ENCODE measurements at regions of chrX and their contacts with region 1.

Region 1: DNA sequence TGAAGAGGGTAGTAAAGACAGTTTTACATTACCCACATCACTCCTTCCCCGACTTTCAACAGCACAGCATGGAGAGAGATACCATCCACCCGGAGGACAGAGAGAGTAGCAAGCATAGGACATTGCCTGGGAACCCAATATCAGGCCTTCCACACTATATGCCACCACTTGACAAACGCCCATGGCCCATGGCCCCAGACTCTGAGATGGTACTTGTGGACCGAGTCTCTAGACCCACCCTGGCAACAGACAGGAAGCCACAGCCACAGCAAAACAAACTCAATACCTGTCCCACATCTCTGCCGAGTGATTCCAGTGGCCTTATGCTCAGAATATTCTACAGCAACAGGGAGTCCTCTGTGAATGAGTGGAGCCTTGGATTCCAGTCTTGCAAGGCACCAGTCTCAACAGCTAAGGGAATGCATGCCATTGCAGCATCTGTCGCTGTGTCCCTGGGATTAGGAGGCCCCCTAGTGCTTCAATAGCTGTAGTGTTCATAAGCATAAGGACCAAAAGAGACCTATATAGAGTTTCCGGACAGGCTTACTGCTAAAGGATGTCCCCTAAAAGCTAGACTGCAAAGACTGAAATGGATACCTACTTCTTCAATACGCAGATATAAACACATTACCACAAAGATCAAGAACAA is 14.7 kb upstream of the CT55 start:
- DNase-seq: peak; percentile 69
- H3K4me3 Mint-ChIP-seq: no peak overlapping the region
- H3K27ac Mint-ChIP-seq: no peak overlapping the region
- H3K4me1 Mint-ChIP-seq: no peaks in the 10 kb centered on the region
- H3K27me3 Mint-ChIP-seq: peaks cover 98% of the 10 kb centered on the region
- CTCF ChIP-seq: peak; percentile 73

Region 2: GRCh38 chrX:135477576-135477975 is 291.7 kb after region 1 on chrX:
- CTCF ChIA-PET with region 1: interaction called, 6 read pairs
- POLR2A ChIA-PET with region 1: no interaction called
- intact Hi-C with region 1: loop called (anchors 1 kb)
- DNase-seq: peak; percentile 85
- H3K4me3 Mint-ChIP-seq: no peak overlapping the region
- H3K27ac Mint-ChIP-seq: no peak overlapping the region
- H3K4me1 Mint-ChIP-seq: peaks cover 6% of the 10 kb centered on the region
- H3K27me3 Mint-ChIP-seq: peaks cover 69% of the 10 kb centered on the region
- CTCF ChIP-seq: peak; percentile 45

Region 3: GRCh38 chrX:135572436-135572835 is 386.5 kb after region 1 on chrX:
- CTCF ChIA-PET with region 1: no interaction called
- POLR2A ChIA-PET with region 1: no interaction called
- intact Hi-C with region 1: loop called (anchors 1 kb)
- DNase-seq: no peak
- H3K4me3 Mint-ChIP-seq: no peak overlapping the region
- H3K27ac Mint-ChIP-seq: no peak overlapping the region
- H3K4me1 Mint-ChIP-seq: no peaks in the 10 kb centered on the region
- H3K27me3 Mint-ChIP-seq: peaks cover 24% of the 10 kb centered on the region
- CTCF ChIP-seq: peak; percentile 55

Region 4: GRCh38 chrX:136519070-136519469 is 1333.2 kb after region 1 on chrX:
- CTCF ChIA-PET with region 1: no interaction called
- POLR2A ChIA-PET with region 1: no interaction called
- intact Hi-C with region 1: no loop called
- DNase-seq: no peak
- H3K4me3 Mint-ChIP-seq: no peak overlapping the region
- H3K27ac Mint-ChIP-seq: no peak overlapping the region
- H3K4me1 Mint-ChIP-seq: no peaks in the 10 kb centered on the region
- H3K27me3 Mint-ChIP-seq: peaks cover under 1% of the 10 kb centered on the region
- CTCF ChIP-seq: no peak